Aorta (tissue), 5 donors: ENCODE measurements at regions of chr11 and their contacts with region 1.

Region 1: DNA sequence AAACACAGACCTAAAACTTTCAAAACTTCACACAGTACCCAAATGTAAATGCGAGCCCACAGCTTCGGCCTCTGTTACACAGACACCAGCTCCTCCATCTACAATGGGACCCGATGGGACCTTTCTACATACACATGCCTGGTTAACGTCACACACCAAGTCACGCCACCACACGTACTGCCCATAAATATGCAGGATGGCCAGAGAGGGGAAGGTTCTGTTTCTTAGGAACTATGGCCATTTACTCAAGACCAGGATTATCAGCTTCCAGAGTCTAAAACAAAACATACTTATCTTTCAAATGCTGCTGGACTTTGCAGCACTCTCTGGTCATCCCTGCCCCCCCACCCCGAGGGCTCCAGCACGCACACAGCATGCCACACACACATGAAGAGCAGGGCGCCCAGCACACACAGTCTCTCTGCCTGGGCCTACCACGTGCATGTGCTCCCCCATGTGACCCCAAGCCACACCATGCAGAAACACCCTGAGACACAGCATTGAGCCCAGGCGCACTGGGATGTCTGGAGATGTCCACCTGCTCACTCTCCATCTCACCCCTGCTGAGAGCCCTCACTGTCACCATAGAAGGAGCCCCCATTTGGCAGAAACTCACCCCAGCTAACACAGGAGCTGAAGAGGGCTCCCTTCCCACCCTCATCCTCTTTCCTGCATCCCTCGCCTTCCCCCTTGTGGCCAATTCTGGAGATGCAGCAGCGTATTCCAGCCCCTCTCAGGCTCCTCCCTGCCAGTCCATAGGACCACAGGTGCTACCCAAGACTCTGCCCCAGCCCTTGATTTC is 61.8 kb downstream of the SLC22A12 start:
- DNase-seq: peak; percentile 81 to 95
- ATAC-seq: peak; percentile 70
- H3K4me3 ChIP-seq: no peak overlapping the region
- H3K27ac ChIP-seq: no peak overlapping the region
- H3K4me1 ChIP-seq: no peaks in the 10 kb centered on the region
- H3K27me3 ChIP-seq: no peaks in the 10 kb centered on the region

Region 2: DNA sequence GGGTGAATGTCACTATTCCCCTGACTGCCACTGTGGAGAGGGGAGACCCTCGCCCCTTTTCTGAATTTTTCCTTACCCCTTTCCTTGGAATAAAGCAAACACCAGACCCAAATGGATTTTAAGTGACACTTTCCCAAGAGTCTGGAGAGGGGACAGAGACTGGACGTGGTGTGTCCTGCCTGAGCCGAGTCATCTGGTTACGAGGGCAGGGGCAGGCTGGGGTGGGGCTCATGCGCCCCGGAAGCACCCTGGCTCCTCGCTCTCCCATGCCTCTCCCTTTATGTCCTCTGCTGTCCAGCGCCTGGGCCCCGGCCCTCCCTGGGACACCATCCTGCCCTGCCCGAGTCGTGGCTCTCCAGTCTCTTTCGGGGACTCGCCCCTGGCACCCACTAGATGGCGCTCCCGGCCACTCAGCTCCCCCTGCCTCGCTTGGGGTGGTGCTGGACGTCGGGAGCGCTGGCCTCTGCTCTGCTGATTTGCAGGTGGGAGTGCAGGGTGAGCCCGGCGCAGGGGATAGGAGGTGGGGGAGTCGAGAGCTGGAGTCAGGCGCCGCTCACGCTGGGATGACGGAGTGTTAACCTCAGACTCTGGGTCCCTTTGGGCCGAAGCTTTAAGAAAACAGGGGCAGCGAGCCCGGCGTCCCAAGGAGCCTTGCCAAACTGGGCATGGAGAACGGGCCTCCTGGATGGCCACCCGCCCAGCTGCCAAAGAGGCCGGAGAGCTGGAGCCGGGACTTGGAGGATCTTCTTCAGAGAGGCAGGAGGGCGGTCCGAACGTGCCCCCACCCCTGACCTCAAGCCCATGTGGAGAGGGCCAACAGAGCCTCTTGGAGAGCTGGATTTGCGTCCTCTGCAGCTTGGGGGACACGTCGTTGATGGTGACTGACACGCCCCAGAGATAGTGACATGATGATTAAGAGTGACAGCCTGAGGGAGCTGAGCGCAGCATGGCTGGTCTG is 203.9 kb before region 1 on chr11:
- intact Hi-C with region 1: loop called in 1 of 2 experiments (anchors 2 kb)
- DNase-seq: peak; percentile 92 to 95
- ATAC-seq: peak; percentile 95
- H3K4me3 ChIP-seq: peak overlapping the region in 1 of 2 donors; percentile 7
- H3K27ac ChIP-seq: peak overlapping the region in 1 of 2 donors; percentile 77
- H3K4me1 ChIP-seq: no peaks in the 10 kb centered on the region
- H3K27me3 ChIP-seq: no peaks in the 10 kb centered on the region

Region 3: GRCh38 chr11:64489831-64490441 is 162.9 kb before region 1 on chr11:
- intact Hi-C with region 1: loop called (anchors 2 to 5 kb)
- DNase-seq: peak; percentile 73 to 88
- ATAC-seq: peak; percentile 87
- H3K4me3 ChIP-seq: no peak overlapping the region
- H3K27ac ChIP-seq: no peak overlapping the region
- H3K4me1 ChIP-seq: no peaks in the 10 kb centered on the region
- H3K27me3 ChIP-seq: no peaks in the 10 kb centered on the region

Region 4: GRCh38 chr11:64553551-64554201 is 99.1 kb before region 1 on chr11:
- intact Hi-C with region 1: loop called in 1 of 2 experiments (anchors 2 kb)
- DNase-seq: peak; percentile 72 to 89
- ATAC-seq: peak; percentile 79
- H3K4me3 ChIP-seq: no peak overlapping the region
- H3K27ac ChIP-seq: peak overlapping the region in 1 of 2 donors; percentile 35
- H3K4me1 ChIP-seq: no peaks in the 10 kb centered on the region
- H3K27me3 ChIP-seq: no peaks in the 10 kb centered on the region